Transverse colon (tissue), 4 donors: ENCODE measurements at regions of chr18 and their contacts with region 1.

Region 1: DNA sequence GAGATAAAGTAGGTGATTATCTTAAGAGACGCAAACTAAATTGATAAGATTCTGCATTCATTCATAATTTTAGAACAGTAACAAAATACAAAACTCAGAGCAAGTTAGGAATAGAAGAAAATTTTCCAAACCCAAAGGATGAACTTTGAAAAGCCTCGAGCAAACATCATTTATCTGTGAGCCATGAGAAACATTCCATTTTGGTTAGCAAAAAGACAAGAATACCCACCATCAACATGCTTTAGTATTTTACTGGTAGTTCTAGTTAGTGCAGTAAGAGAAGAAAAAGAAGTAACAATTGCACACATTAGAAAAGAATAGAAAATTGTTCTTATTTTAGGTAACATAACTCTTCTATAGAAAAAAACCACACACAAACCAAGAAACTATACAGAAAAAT is 291.3 kb upstream of the TCF4 start:
- DNase-seq: no peak
- H3K4me3 ChIP-seq: no peak overlapping the region
- H3K27ac ChIP-seq: no peak overlapping the region
- H3K4me1 ChIP-seq: no peaks in the 10 kb centered on the region
- H3K27me3 ChIP-seq: no peaks in the 10 kb centered on the region
- CTCF ChIP-seq: no peak
- EP300 ChIP-seq: no peak
- POLR2A ChIP-seq: no peak

Region 2: DNA sequence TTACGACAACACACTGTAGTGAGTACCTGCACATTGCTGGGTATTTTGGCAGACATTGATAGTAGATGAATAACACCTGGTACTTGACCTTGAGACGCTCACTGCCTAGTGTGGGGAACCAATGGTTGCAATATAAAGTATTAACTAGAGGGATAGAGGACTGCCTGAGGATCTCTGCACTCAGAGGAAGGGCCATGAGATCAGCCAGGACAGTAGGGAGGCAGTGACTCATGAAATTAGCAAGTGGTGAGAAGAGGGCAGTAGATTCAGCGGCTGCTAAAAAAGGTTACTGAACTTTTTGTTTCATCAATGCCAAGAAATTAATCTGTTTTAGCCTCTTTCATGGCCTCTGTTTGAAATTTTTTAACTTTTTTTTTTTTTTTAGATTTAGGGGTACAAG is 40.5 kb before region 1 on chr18:
- in situ Hi-C with region 1: no loop called
- intact Hi-C with region 1: loop called (anchors 1 kb)
- DNase-seq: no peak
- H3K4me3 ChIP-seq: no peak overlapping the region
- H3K27ac ChIP-seq: no peak overlapping the region
- H3K4me1 ChIP-seq: no peaks in the 10 kb centered on the region
- H3K27me3 ChIP-seq: no peaks in the 10 kb centered on the region
- CTCF ChIP-seq: no peak
- EP300 ChIP-seq: no peak
- POLR2A ChIP-seq: no peak

Region 3: GRCh38 chr18:56083097-56083521 is 203.8 kb after region 1 on chr18:
- in situ Hi-C with region 1: no loop called
- intact Hi-C with region 1: no loop called
- DNase-seq: no peak
- H3K4me3 ChIP-seq: no peak overlapping the region
- H3K27ac ChIP-seq: peak overlapping the region in 1 of 4 donors; percentile 11
- H3K4me1 ChIP-seq: no peaks in the 10 kb centered on the region
- H3K27me3 ChIP-seq: no peaks in the 10 kb centered on the region
- CTCF ChIP-seq: no peak
- EP300 ChIP-seq: no peak
- POLR2A ChIP-seq: no peak